PC-9 (cell line): ENCODE measurements at regions of chr2 and their contacts with region 1.

Region 1: GRCh38 chr2:31333527-31334183 is 80.9 kb downstream of the XDH start:
- DNase-seq: peak; percentile 62 to 74
- H3K4me3 ChIP-seq: no peak overlapping the region
- H3K27ac ChIP-seq: no peak overlapping the region
- H3K4me1 ChIP-seq: no peaks in the 10 kb centered on the region; the same call in 1 of the 2 replicates
- H3K27me3 ChIP-seq: no peaks in the 10 kb centered on the region
- CTCF ChIP-seq: peak; percentile 97

Region 2: GRCh38 chr2:30862054-30862651 is 471.5 kb before region 1 on chr2:
- CTCF ChIA-PET with region 1: no interaction called
- POLR2A ChIA-PET with region 1: no interaction called
- intact Hi-C with region 1: loop called (anchors 1 kb)
- DNase-seq: peak; percentile 38 to 67
- H3K4me3 ChIP-seq: no peak overlapping the region
- H3K27ac ChIP-seq: no peak overlapping the region
- H3K4me1 ChIP-seq: no peaks in the 10 kb centered on the region
- H3K27me3 ChIP-seq: no peaks in the 10 kb centered on the region
- CTCF ChIP-seq: peak; percentile 86

Region 3: GRCh38 chr2:31233741-31234682 is 99.6 kb before region 1 on chr2 and contains the start of gene EHD3:
- CTCF ChIA-PET with region 1: no interaction called
- POLR2A ChIA-PET with region 1: no interaction called
- intact Hi-C with region 1: loop called (anchors 5 kb)
- DNase-seq: peak; percentile 69 to 82
- H3K4me3 ChIP-seq: peak within 1 kb of the TSS; percentile 62
- H3K27ac ChIP-seq: no peak within 1 kb of the TSS
- H3K4me1 ChIP-seq: peaks cover 10% of the 10 kb centered on the region
- H3K27me3 ChIP-seq: no peaks in the 10 kb centered on the region
- CTCF ChIP-seq: peak; percentile 73
- total RNA-seq, gene EHD3: 1.8 and 1.9 TPM in 2 replicates

Region 4: GRCh38 chr2:31429759-31430438 is 96.2 kb after region 1 on chr2:
- CTCF ChIA-PET with region 1: no interaction called
- POLR2A ChIA-PET with region 1: no interaction called
- intact Hi-C with region 1: loop called (anchors 2 kb)
- DNase-seq: peak; percentile 73 to 86
- H3K4me3 ChIP-seq: 0 out of 2 replicates have a peak overlapping the region, but pooled peaks have one; percentile 4
- H3K27ac ChIP-seq: peak overlapping the region; percentile 72
- H3K4me1 ChIP-seq: peaks cover 30% of the 10 kb centered on the region
- H3K27me3 ChIP-seq: no peaks in the 10 kb centered on the region
- CTCF ChIP-seq: no peak